ENCODE measurements at regions of chr17 and their contacts with region 1.

Region 1: DNA sequence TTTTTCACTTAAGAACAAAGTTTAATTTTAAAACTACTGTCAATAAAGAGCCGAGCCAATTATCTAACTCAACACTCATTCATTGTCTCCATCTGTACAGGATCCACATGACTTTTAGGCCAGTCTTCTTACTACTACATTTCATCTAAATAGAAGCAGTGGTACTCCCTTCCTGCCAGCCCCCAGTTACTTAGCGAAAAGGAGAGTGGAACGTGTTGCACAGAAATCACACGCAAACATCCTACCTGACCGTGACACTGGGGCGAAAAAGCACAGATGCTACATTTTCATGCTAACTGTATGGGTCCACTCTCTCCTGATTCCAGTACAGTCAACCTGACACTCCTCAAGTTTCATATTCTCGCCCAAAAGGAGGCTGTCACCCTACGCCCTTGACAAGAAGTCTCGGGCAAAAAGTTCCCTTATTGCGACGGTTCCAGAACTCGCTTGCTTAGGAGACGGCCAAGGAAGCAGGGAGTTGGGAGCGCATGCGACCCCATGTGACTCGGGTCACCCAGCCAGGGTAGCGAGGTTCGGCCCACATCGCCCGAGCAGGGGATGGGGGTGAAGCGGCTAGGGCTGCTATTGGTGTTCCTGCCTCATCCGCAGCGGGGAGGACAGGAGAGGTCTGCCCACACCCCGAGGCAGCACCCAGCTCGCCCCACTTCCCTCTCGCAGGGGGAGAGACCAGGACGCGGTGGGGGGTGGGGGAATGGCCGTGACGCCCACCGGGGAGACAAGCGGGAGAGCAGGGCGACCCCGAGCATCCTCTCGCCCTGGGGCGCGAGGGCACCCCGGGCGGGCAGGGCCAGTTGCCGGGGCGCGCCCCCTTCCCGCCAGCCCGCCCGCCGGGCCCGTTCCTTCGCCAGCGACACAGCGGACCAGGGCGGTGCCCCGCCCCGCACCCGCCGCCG is 935 bp downstream of the GNA13 start:
- DNase-seq: peak; percentile 27 to 69 (median 40)
- ATAC-seq: peak; percentile 17
- H3K4me3 ChIP-seq: peak overlapping the region; percentile 94
- H3K4me3 Mint-ChIP-seq: peak overlapping the region; percentile 89 to 100 (median 96)
- H3K27ac ChIP-seq: peak overlapping the region; percentile 99
- H3K27ac Mint-ChIP-seq: peak overlapping the region; percentile 93 to 99 (median 96)
- H3K4me1 ChIP-seq: peaks cover 17 to 20% of the 10 kb centered on the region in 2 donors
- H3K4me1 Mint-ChIP-seq: peaks cover 33 to 58% (median 47%) of the 10 kb centered on the region in 7 donors
- H3K27me3 ChIP-seq: no peaks in the 10 kb centered on the region
- H3K27me3 Mint-ChIP-seq: peaks cover 0 to 10% (median 0%) of the 10 kb centered on the region in 5 donors

Region 2: DNA sequence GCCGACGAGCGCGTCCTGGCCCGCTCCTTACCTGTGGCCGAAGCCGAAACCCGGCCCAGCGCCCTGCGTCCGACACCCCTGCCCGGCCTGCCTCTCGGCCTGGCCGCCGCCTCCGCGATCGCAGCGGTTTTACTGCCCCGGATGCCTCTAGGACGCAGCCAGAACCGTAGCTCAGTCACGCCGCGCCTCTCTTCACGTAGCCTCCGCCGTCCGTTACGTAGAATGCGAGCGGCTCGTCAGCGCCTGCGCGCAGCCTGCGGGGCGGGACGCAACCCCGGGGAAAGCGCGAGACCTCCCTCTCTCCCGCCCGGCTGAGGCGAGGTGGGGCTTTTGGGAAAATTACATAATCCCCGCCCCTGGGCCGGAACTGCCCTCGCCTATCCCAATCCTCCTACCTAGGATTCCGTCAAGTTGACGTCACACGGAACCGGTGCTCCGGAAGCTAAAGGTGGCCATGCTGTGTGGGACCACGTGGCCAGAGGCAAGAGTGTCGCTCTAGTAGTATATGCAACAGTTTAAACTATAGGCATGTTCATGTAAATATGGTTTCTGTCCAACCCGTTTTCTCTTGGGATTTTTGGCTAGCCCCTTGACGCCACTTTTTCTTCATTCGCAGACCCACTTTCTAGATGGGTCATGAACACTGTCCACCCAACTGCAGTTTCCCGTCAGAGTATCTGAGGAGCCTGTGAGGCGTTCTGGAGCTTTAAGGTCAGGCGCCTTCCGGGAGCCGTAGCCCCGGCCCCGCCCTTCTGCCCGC is 1282.0 kb before region 1 on chr17 and contains the start of gene CCDC47:
- CTCF ChIA-PET with region 1: no interaction called
- POLR2A ChIA-PET with region 1: no interaction called
- intact Hi-C with region 1: loop called in 1 of 2 experiments (anchors 2 kb)
- DNase-seq: peak; percentile 92 to 99 (median 99)
- ATAC-seq: peak; percentile 88
- H3K4me3 ChIP-seq: peak within 1 kb of the TSS; percentile 85
- H3K4me3 Mint-ChIP-seq: peak within 1 kb of the TSS; percentile 91 to 99 (median 98)
- H3K27ac ChIP-seq: peak within 1 kb of the TSS; percentile 100
- H3K27ac Mint-ChIP-seq: peak within 1 kb of the TSS; percentile 97 to 100 (median 99)
- H3K4me1 ChIP-seq: peaks cover 21 to 46% of the 10 kb centered on the region in 2 donors
- H3K4me1 Mint-ChIP-seq: peaks cover 31 to 84% (median 62%) of the 10 kb centered on the region in 7 donors
- H3K27me3 ChIP-seq: no peaks in the 10 kb centered on the region
- H3K27me3 Mint-ChIP-seq: peaks cover 0 to 7% (median 0%) of the 10 kb centered on the region in 5 donors
- total RNA-seq, gene CCDC47: 31.8 to 62.9 (median 34.7) TPM

Region 3: DNA sequence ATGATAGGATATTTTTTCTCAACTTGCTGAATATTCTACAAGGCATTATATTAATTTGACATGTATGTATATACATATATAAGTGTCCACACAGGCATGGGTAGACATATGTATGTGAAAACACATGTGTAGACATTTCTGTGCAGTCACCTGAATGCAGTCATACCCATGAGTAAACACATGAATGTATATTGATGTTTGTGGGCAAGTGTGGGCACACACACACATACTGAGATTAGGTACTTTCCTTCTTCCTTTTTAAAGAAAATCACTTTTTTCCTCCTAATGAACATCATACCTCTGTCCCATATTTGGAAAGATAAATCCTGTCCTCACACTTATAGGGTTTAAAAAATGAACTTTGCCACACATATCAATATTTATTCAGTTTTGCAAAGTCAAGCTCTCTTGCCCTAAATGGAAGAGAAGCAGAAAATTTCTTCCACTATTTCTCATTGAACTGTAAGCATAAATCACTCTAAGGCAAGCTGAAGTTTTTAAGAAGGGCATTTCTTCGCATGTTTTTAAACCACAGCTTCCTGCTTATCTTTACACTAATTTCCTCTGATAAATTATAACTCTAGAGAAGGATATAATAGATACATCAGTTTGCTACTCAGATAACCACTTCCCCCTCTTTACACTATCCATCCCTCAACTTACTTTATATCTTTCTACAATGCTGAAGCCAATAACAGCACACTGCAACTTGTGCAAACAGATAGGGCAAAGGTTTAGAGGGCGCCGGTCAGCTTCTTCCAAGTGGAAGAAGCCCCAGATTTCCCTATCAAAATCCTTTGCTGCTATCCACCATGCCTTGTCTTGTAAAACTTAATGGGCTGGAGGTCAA is 86.7 kb before region 1 on chr17:
- CTCF ChIA-PET with region 1: interaction called, 4 read pairs
- POLR2A ChIA-PET with region 1: interaction called, 37 read pairs
- intact Hi-C with region 1: loop called in 1 of 2 experiments (anchors 2 kb)
- DNase-seq: peak in 3 of 9 donors; percentile 23 to 31 (median 27)
- ATAC-seq: peak; percentile 4
- H3K4me3 ChIP-seq: peak overlapping the region; percentile 19
- H3K4me3 Mint-ChIP-seq: peak overlapping the region; percentile 45 to 78 (median 66)
- H3K27ac ChIP-seq: peak overlapping the region; percentile 69
- H3K27ac Mint-ChIP-seq: peak overlapping the region; percentile 70 to 94 (median 85)
- H3K4me1 ChIP-seq: peaks cover 31 to 55% of the 10 kb centered on the region in 2 donors
- H3K4me1 Mint-ChIP-seq: peaks cover 27 to 70% (median 53%) of the 10 kb centered on the region in 7 donors
- H3K27me3 ChIP-seq: no peaks in the 10 kb centered on the region
- H3K27me3 Mint-ChIP-seq: no peaks in the 10 kb centered on the region

Region 4: DNA sequence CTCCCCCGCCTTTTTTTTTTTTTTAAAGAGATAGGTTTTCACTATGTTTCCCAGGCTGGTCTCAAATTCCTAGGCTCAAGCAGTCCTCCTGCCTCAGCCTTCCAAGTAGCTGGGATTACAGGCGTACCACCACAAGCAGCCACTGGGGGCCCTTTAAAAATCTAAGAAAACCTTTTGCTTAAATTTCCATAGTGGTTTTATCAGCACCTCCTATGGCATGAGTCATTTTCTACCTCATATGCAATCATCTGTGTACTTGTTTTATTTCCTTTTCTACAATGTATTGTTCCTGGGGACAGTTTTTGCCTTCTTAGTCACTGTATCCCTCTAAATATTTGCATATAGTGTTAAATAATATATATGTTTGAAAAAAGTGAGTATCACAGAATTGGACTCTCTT is 28.3 kb before region 1 on chr17:
- CTCF ChIA-PET with region 1: no interaction called
- POLR2A ChIA-PET with region 1: interaction called, 10 read pairs
- intact Hi-C with region 1: loop called (anchors 1 to 2 kb)
- DNase-seq: peak in 5 of 9 donors; percentile 19 to 68 (median 36)
- ATAC-seq: peak; percentile 82
- H3K4me3 ChIP-seq: no peak overlapping the region
- H3K4me3 Mint-ChIP-seq: peak overlapping the region in 7 of 10 donors; percentile 32 to 73 (median 56)
- H3K27ac ChIP-seq: peak overlapping the region; percentile 8
- H3K27ac Mint-ChIP-seq: peak overlapping the region in 6 of 9 donors; percentile 31 to 85 (median 58)
- H3K4me1 ChIP-seq: peaks cover 49 to 61% of the 10 kb centered on the region in 2 donors
- H3K4me1 Mint-ChIP-seq: peaks cover 54 to 96% (median 86%) of the 10 kb centered on the region in 7 donors
- H3K27me3 ChIP-seq: no peaks in the 10 kb centered on the region
- H3K27me3 Mint-ChIP-seq: no peaks in the 10 kb centered on the region

Region 5: GRCh38 chr17:65109990-65110680 is 54.5 kb after region 1 on chr17:
- CTCF ChIA-PET with region 1: no interaction called
- POLR2A ChIA-PET with region 1: no interaction called
- intact Hi-C with region 1: no loop called
- DNase-seq: no peak
- ATAC-seq: no peak
- H3K4me3 ChIP-seq: no peak overlapping the region
- H3K4me3 Mint-ChIP-seq: no peak overlapping the region
- H3K27ac ChIP-seq: no peak overlapping the region
- H3K27ac Mint-ChIP-seq: no peak overlapping the region
- H3K4me1 ChIP-seq: no peaks in the 10 kb centered on the region
- H3K4me1 Mint-ChIP-seq: no peaks in the 10 kb centered on the region
- H3K27me3 ChIP-seq: no peaks in the 10 kb centered on the region
- H3K27me3 Mint-ChIP-seq: peaks cover 0 to 54% (median 4%) of the 10 kb centered on the region in 5 donors

Region 6: DNA sequence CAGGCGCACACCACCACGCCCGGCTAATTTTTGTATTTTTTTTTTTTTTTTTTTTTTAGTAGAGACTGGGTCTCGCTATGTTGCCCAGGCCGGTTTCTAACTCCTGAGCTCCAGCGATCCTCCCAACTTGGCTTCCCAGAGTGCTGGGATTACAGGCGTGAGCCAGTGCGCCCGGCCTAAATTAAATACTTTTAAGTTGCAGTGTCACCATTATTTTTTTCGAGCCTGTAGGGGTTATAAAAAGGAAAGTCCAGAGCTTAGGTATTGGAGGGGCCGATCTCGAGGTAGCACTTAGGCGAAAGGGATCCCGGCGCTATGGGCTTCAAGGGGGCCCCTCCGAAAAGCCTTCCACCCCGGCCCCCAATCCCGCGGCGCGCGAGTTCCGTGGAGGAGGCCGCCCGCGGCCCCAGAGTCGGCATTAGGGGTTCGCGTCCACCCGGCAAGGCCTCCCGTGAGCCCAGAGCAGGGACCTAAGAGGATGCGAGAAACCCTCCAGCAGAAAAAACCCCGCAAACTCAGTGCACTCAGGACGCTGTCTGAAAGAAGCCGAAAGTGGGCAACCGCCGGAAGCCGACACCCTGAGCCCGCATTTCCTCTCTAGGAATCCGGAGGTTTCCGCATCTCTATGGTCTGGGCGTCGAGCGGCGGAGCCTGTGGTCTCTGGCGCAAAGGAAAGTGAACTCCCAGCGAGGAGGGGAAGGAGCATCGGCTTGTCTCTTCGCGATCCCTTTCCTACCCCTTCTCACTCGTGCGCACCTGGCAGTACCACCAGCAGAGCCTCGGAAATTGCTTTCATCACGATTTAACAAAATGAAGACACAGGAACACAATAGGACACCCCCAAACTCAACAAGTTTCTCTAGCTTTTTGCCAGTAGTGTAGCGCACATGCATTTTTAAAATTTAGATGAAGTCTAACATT is 67.5 kb after region 1 on chr17:
- CTCF ChIA-PET with region 1: no interaction called
- POLR2A ChIA-PET with region 1: interaction called, 4 read pairs
- intact Hi-C with region 1: loop called (anchors 1 to 2 kb)
- DNase-seq: peak; percentile 60 to 91 (median 84)
- ATAC-seq: peak; percentile 98
- H3K4me3 ChIP-seq: peak overlapping the region; percentile 43
- H3K4me3 Mint-ChIP-seq: peak overlapping the region; percentile 74 to 95 (median 92)
- H3K27ac ChIP-seq: peak overlapping the region; percentile 74
- H3K27ac Mint-ChIP-seq: peak overlapping the region; percentile 88 to 99 (median 98)
- H3K4me1 ChIP-seq: peaks cover 0 to 3% of the 10 kb centered on the region in 2 donors
- H3K4me1 Mint-ChIP-seq: peaks cover 9 to 32% (median 10%) of the 10 kb centered on the region in 7 donors
- H3K27me3 ChIP-seq: no peaks in the 10 kb centered on the region
- H3K27me3 Mint-ChIP-seq: peaks cover 0 to 12% (median 4%) of the 10 kb centered on the region in 5 donors

Region 7: DNA sequence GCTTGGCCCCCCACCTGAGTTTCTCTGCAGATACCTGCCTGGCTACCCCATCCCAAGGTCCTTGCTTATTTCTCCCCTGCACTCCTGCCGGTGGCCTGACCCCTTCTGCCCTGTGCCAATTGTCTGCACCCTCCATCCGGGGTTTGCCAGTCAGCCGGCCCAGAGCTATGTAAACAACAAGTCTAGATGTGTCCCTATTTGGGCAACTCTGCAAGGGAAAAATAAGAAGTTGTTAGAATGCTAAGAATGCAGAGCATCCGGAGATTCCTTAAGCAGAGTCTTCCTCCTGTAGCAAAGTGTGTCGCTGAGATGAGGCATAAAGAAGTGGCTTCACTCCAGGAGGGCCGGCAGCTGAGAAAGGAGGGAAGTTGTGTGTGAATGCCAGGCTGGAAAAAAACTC is 128.1 kb after region 1 on chr17:
- CTCF ChIA-PET with region 1: no interaction called
- POLR2A ChIA-PET with region 1: no interaction called
- intact Hi-C with region 1: no loop called
- DNase-seq: no peak
- ATAC-seq: no peak
- H3K4me3 ChIP-seq: no peak overlapping the region
- H3K4me3 Mint-ChIP-seq: no peak overlapping the region
- H3K27ac ChIP-seq: no peak overlapping the region
- H3K27ac Mint-ChIP-seq: no peak overlapping the region
- H3K4me1 ChIP-seq: peaks cover 0 to 43% of the 10 kb centered on the region in 2 donors
- H3K4me1 Mint-ChIP-seq: peaks cover 0 to 59% (median 15%) of the 10 kb centered on the region in 7 donors
- H3K27me3 ChIP-seq: no peaks in the 10 kb centered on the region
- H3K27me3 Mint-ChIP-seq: peaks cover 0 to 10% (median 0%) of the 10 kb centered on the region in 5 donors

Region 8: DNA sequence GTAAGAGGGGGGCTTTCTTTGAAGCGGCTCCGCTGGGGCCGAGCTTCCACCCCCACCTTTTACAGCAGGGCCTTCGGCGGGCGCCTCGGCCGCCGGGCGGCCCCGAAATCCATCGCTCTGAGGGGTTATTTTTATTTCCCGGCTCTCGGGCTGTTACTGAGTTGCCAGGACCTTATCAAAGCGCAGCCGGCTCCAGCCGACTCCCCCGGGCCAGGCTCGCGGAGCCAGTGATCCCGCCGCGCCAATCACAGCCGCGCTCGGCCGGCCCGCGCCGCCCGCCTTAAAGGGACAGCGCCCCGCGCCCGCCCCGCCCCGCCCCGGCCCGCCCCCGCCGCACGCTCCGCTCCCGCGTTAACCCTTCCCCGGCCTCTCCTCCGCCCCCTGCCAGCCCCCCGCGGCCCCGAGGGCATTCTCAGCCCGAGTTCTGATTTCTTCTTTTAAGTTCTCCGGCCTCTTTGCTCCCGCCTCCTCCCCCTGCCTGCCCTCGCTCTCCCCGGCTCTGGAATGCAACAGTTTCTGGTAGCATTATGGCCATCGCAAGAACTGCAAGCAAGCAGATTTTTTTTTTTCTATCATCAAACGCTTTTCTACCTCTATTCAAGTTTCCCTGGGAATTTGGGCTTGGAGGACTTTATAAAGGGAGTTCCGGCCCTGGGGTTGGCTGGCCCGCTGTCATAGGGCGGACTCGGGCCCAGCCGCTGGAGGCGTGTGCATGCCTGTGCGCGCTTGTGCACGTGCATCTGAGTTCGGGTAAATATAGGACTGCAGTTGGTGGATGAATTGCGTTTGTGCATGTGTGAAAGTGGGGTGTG is 506.0 kb after region 1 on chr17 and contains the start of gene AXIN2:
- CTCF ChIA-PET with region 1: no interaction called
- POLR2A ChIA-PET with region 1: no interaction called
- intact Hi-C with region 1: loop called in 1 of 2 experiments (anchors 5 kb)
- DNase-seq: peak; percentile 70 to 91 (median 88)
- ATAC-seq: peak; percentile 91
- H3K4me3 ChIP-seq: peak within 1 kb of the TSS; percentile 70
- H3K4me3 Mint-ChIP-seq: peak within 1 kb of the TSS in 8 of 10 donors; percentile 79 to 94 (median 87)
- H3K27ac ChIP-seq: peak within 1 kb of the TSS; percentile 92
- H3K27ac Mint-ChIP-seq: peak within 1 kb of the TSS; percentile 70 to 93 (median 90)
- H3K4me1 ChIP-seq: peaks cover 18 to 24% of the 10 kb centered on the region in 2 donors
- H3K4me1 Mint-ChIP-seq: peaks cover 10 to 37% (median 31%) of the 10 kb centered on the region in 7 donors
- H3K27me3 ChIP-seq: no peaks in the 10 kb centered on the region
- H3K27me3 Mint-ChIP-seq: peaks cover 0 to 22% (median 0%) of the 10 kb centered on the region in 5 donors
- total RNA-seq, gene AXIN2: 7.4 to 63.4 (median 39.5) TPM

Measured in naive thymus-derived CD4-positive, alpha-beta T cell (primary cell).